ENCODE measurements at regions of chr9 and their contacts with region 1.

Region 1: GRCh38 chr9:126228781-126229444 is 97.7 kb upstream of the MVB12B start:
- DNase-seq: peak; percentile 69 to 94 (median 86)

Region 2: DNA sequence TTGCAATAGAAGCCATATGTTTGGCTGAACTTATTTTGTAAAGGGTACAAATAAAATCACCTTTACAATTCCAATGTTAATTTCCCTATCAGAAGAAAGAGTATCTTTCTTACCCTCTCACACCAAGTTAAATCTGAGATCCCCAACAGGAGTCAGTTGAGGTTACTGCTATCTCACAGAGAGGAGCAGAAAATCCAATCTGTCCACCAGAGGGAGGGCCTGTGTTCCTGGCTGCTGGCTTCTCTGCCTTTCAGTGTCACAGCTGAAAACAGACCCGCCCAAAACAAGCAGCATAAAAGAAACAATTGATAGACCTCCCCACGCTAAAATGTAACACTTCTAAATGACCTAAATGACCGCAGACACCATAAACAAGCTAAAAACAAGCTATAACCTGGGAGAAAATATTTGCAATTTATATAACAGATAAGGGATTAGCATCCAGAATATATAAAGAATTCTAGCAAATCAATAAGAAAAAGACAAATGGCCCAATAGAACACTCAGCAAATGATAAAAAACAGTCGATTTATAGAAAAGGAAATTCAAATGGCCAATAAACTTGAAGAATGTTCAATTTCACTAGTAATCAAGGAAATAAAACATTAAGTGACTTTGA is 73.2 kb after region 1 on chr9:
- intact Hi-C with region 1: loop called (anchors 5 kb)
- DNase-seq: peak; percentile 38 to 92 (median 80)

Measured in head of caudate nucleus (tissue), 42 donors.